CD4-positive, alpha-beta memory T cell (primary cell): ENCODE measurements at regions of chr4 and their contacts with region 1.

Region 1: GRCh38 chr4:120156120-120156718 is 89.6 kb upstream of the MAD2L1 start:
- DNase-seq: peak; percentile 38 to 56 (median 53)
- H3K4me3 ChIP-seq: no peak overlapping the region
- H3K4me3 Mint-ChIP-seq: no peak overlapping the region
- H3K27ac ChIP-seq: no peak overlapping the region
- H3K27ac Mint-ChIP-seq: no peak overlapping the region
- H3K4me1 ChIP-seq: no peaks in the 10 kb centered on the region
- H3K4me1 Mint-ChIP-seq: no peaks in the 10 kb centered on the region
- H3K27me3 ChIP-seq: no peaks in the 10 kb centered on the region
- H3K27me3 Mint-ChIP-seq: peaks cover 0 to 2% of the 10 kb centered on the region in 2 donors

Region 2: GRCh38 chr4:120066517-120067340 is 89.5 kb before region 1 on chr4 and contains the start of gene MAD2L1:
- CTCF ChIA-PET with region 1: no interaction called
- POLR2A ChIA-PET with region 1: no interaction called
- intact Hi-C with region 1: loop called (anchors 5 kb)
- DNase-seq: peak; percentile 98 to 99 (median 99)
- H3K4me3 ChIP-seq: peak within 1 kb of the TSS; percentile 83 to 94
- H3K4me3 Mint-ChIP-seq: peak within 1 kb of the TSS; percentile 89 to 99 (median 96)
- H3K27ac ChIP-seq: peak within 1 kb of the TSS; percentile 98
- H3K27ac Mint-ChIP-seq: peak within 1 kb of the TSS; percentile 96 to 99 (median 99)
- H3K4me1 ChIP-seq: peaks cover 55% of the 10 kb centered on the region
- H3K4me1 Mint-ChIP-seq: peaks cover 39 to 75% (median 52%) of the 10 kb centered on the region in 4 donors
- H3K27me3 ChIP-seq: no peaks in the 10 kb centered on the region
- H3K27me3 Mint-ChIP-seq: no peaks in the 10 kb centered on the region
- total RNA-seq, gene MAD2L1: 8.0 to 9.9 TPM

Region 3: DNA sequence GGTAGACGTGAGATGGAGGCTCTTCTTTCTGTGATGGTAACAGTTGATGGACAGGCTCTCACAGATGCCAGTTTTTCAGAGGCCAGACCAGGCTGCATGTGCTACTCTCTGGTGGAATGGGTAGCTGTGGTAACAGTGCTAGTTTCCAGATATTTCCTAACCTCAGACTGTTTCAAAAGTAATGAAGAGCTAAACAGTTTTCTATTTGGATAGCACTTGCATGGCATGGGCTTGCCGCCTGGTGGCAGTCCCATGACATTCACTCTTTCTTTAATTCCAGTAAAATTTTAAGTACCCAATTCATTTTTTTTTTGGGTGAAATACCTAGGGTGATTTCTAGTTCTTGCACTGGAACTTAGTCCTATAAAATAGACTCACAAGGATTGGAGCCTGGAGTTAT is 130.6 kb after region 1 on chr4:
- CTCF ChIA-PET with region 1: no interaction called
- POLR2A ChIA-PET with region 1: no interaction called
- intact Hi-C with region 1: no loop called
- DNase-seq: no peak
- H3K4me3 ChIP-seq: no peak overlapping the region
- H3K4me3 Mint-ChIP-seq: no peak overlapping the region
- H3K27ac ChIP-seq: no peak overlapping the region
- H3K27ac Mint-ChIP-seq: no peak overlapping the region
- H3K4me1 ChIP-seq: no peaks in the 10 kb centered on the region
- H3K4me1 Mint-ChIP-seq: no peaks in the 10 kb centered on the region
- H3K27me3 ChIP-seq: no peaks in the 10 kb centered on the region
- H3K27me3 Mint-ChIP-seq: no peaks in the 10 kb centered on the region

Region 4: DNA sequence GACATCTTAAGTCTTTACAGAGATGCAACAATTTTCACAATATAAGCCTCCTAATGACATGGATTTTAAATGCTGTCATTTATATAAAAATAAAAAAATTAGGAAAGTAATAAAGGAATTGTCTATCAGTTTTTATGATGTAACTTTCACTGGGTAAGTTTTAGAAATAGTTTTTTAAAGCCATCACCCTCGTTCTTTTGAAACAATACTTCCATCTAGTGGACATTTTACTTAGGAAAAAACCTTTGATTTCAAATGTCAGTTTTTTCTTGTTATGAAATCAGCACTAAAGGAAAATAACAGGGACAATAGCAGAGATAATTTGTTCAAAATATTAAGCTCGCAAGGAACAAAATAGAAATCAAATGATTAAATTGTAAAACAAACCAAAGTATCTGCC is 940.4 kb after region 1 on chr4:
- CTCF ChIA-PET with region 1: interaction called, 6 read pairs
- POLR2A ChIA-PET with region 1: no interaction called
- intact Hi-C with region 1: loop called (anchors 1 kb)
- DNase-seq: peak in 4 of 5 donors; percentile 10 to 27 (median 22)
- H3K4me3 ChIP-seq: no peak overlapping the region
- H3K4me3 Mint-ChIP-seq: no peak overlapping the region
- H3K27ac ChIP-seq: no peak overlapping the region
- H3K27ac Mint-ChIP-seq: no peak overlapping the region
- H3K4me1 ChIP-seq: no peaks in the 10 kb centered on the region
- H3K4me1 Mint-ChIP-seq: peaks cover 0 to 4% (median 0%) of the 10 kb centered on the region in 4 donors
- H3K27me3 ChIP-seq: no peaks in the 10 kb centered on the region
- H3K27me3 Mint-ChIP-seq: no peaks in the 10 kb centered on the region

Region 5: GRCh38 chr4:121112530-121112929 is 956.3 kb after region 1 on chr4:
- CTCF ChIA-PET with region 1: no interaction called
- POLR2A ChIA-PET with region 1: no interaction called
- intact Hi-C with region 1: loop called (anchors 5 kb)
- DNase-seq: no peak
- H3K4me3 ChIP-seq: no peak overlapping the region
- H3K4me3 Mint-ChIP-seq: no peak overlapping the region
- H3K27ac ChIP-seq: no peak overlapping the region
- H3K27ac Mint-ChIP-seq: no peak overlapping the region
- H3K4me1 ChIP-seq: no peaks in the 10 kb centered on the region
- H3K4me1 Mint-ChIP-seq: peaks cover 0 to 5% (median 2%) of the 10 kb centered on the region in 4 donors
- H3K27me3 ChIP-seq: no peaks in the 10 kb centered on the region
- H3K27me3 Mint-ChIP-seq: peaks cover 0 to 2% of the 10 kb centered on the region in 2 donors

Region 6: GRCh38 chr4:121252224-121252806 is 1096.1 kb after region 1 on chr4:
- CTCF ChIA-PET with region 1: interaction called, 4 read pairs
- POLR2A ChIA-PET with region 1: no interaction called
- intact Hi-C with region 1: loop called (anchors 1 kb)
- DNase-seq: peak in 4 of 5 donors; percentile 33 to 50 (median 44)
- H3K4me3 ChIP-seq: no peak overlapping the region
- H3K4me3 Mint-ChIP-seq: no peak overlapping the region
- H3K27ac ChIP-seq: no peak overlapping the region
- H3K27ac Mint-ChIP-seq: peak overlapping the region in 4 of 7 donors; percentile 14 to 63 (median 47)
- H3K4me1 ChIP-seq: peaks cover 47% of the 10 kb centered on the region
- H3K4me1 Mint-ChIP-seq: peaks cover 37 to 49% (median 43%) of the 10 kb centered on the region in 4 donors
- H3K27me3 ChIP-seq: no peaks in the 10 kb centered on the region
- H3K27me3 Mint-ChIP-seq: no peaks in the 10 kb centered on the region

Region 7: GRCh38 chr4:121307445-121308327 is 1151.5 kb after region 1 on chr4:
- CTCF ChIA-PET with region 1: interaction called, 28 read pairs
- POLR2A ChIA-PET with region 1: no interaction called
- intact Hi-C with region 1: loop called (anchors 1 kb)
- DNase-seq: peak; percentile 44 to 53 (median 45)
- H3K4me3 ChIP-seq: no peak overlapping the region
- H3K4me3 Mint-ChIP-seq: peak overlapping the region in 1 of 8 donors; percentile 17
- H3K27ac ChIP-seq: no peak overlapping the region
- H3K27ac Mint-ChIP-seq: peak overlapping the region in 2 of 7 donors; percentile 29 to 73
- H3K4me1 ChIP-seq: peaks cover 6% of the 10 kb centered on the region
- H3K4me1 Mint-ChIP-seq: peaks cover 9 to 15% (median 13%) of the 10 kb centered on the region in 4 donors
- H3K27me3 ChIP-seq: no peaks in the 10 kb centered on the region
- H3K27me3 Mint-ChIP-seq: peaks cover 0 to 3% of the 10 kb centered on the region in 2 donors

Region 8: GRCh38 chr4:121656269-121656641 is 1500.0 kb after region 1 on chr4:
- CTCF ChIA-PET with region 1: no interaction called
- POLR2A ChIA-PET with region 1: no interaction called
- intact Hi-C with region 1: loop called (anchors 5 kb)
- DNase-seq: peak in 3 of 5 donors; percentile 5 to 12 (median 7)
- H3K4me3 ChIP-seq: no peak overlapping the region
- H3K4me3 Mint-ChIP-seq: no peak overlapping the region
- H3K27ac ChIP-seq: no peak overlapping the region
- H3K27ac Mint-ChIP-seq: no peak overlapping the region
- H3K4me1 ChIP-seq: no peaks in the 10 kb centered on the region
- H3K4me1 Mint-ChIP-seq: peaks cover 0 to 6% (median 0%) of the 10 kb centered on the region in 4 donors
- H3K27me3 ChIP-seq: no peaks in the 10 kb centered on the region
- H3K27me3 Mint-ChIP-seq: no peaks in the 10 kb centered on the region